ENCODE measurements at regions of chr13 and their contacts with region 1.

Region 1: DNA sequence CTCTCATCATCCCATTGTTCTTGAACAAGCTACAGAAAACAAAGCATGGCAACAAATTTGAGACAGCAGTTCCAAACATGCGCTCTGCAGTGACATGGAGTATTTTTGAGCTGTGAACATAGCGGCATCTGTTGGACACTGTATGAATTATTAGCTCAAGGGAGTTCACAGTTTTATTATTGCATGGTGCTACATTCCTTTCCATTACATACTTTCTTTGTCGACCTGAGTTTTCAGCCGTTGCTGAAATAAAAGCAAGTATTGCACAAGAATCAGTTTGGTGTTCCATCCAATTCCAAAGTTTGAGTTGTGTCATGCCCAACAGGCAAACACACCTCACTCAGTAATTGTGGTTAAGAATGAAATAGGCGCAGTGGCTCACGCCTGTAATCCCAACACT is 30.1 kb upstream of the METTL21C start:
- DNase-seq: peak in 1 of 2 experiments; percentile 68
- H3K4me3 ChIP-seq: no peak overlapping the region
- H3K4me3 Mint-ChIP-seq: no peak overlapping the region
- H3K27ac Mint-ChIP-seq: peak overlapping the region; percentile 80
- H3K4me1 ChIP-seq: no peaks in the 10 kb centered on the region
- H3K4me1 Mint-ChIP-seq: peaks cover 14% of the 10 kb centered on the region
- H3K27me3 ChIP-seq: no peaks in the 10 kb centered on the region
- H3K27me3 Mint-ChIP-seq: peaks cover 6% of the 10 kb centered on the region
- CTCF ChIP-seq: peak; percentile 55 to 63

Region 2: GRCh38 chr13:102596147-102597028 is 128.5 kb before region 1 on chr13 and contains the start of gene TPP2:
- CTCF ChIA-PET with region 1: interaction called, 49 read pairs
- POLR2A ChIA-PET with region 1: interaction called, 10 read pairs
- intact Hi-C with region 1: loop called (anchors 1 kb)
- DNase-seq: peak; percentile 99
- H3K4me3 ChIP-seq: peak within 1 kb of the TSS; percentile 81
- H3K4me3 Mint-ChIP-seq: peak within 1 kb of the TSS; percentile 86
- H3K27ac Mint-ChIP-seq: peak within 1 kb of the TSS; percentile 91
- H3K4me1 ChIP-seq: peaks cover 3% of the 10 kb centered on the region; the same call in 1 of the 2 replicates
- H3K4me1 Mint-ChIP-seq: peaks cover 23% of the 10 kb centered on the region
- H3K27me3 ChIP-seq: no peaks in the 10 kb centered on the region
- H3K27me3 Mint-ChIP-seq: no peaks in the 10 kb centered on the region
- CTCF ChIP-seq: no peak
- total RNA-seq, gene TPP2: 58.9 and 64.3 TPM in 2 replicates

Region 3: GRCh38 chr13:102667911-102668310 is 57.0 kb before region 1 on chr13:
- CTCF ChIA-PET with region 1: no interaction called
- POLR2A ChIA-PET with region 1: no interaction called
- intact Hi-C with region 1: loop called (anchors 1 kb)
- DNase-seq: peak; percentile 47 to 53
- H3K4me3 ChIP-seq: no peak overlapping the region
- H3K4me3 Mint-ChIP-seq: peak overlapping the region; percentile 0
- H3K27ac Mint-ChIP-seq: peak overlapping the region; percentile 62
- H3K4me1 ChIP-seq: peaks cover 48% of the 10 kb centered on the region
- H3K4me1 Mint-ChIP-seq: peaks cover 10% of the 10 kb centered on the region
- H3K27me3 ChIP-seq: no peaks in the 10 kb centered on the region
- H3K27me3 Mint-ChIP-seq: no peaks in the 10 kb centered on the region
- CTCF ChIP-seq: no peak

Region 4: DNA sequence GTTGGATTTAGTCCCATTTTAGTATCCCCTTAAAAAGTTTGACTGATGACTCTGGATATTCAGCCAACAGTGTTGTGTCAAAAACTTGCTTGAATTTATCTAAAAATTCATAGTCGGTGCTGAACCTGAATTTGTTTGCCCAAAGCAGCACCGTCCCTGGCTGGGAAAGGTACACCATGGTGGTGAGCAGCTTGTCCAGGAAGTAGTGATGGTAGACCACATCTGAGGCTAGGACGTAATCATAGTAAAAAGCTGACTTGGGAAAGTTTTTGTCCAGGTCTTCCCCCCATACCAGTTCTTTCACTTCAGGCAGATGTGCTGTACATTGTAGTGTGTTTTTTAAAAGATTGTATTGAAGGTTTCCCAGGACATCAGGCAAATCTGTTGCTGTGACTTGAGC is 38.9 kb before region 1 on chr13:
- CTCF ChIA-PET with region 1: no interaction called
- POLR2A ChIA-PET with region 1: no interaction called
- intact Hi-C with region 1: no loop called
- DNase-seq: no peak
- H3K4me3 ChIP-seq: no peak overlapping the region
- H3K4me3 Mint-ChIP-seq: no peak overlapping the region
- H3K27ac Mint-ChIP-seq: no peak overlapping the region
- H3K4me1 ChIP-seq: no peaks in the 10 kb centered on the region
- H3K4me1 Mint-ChIP-seq: no peaks in the 10 kb centered on the region
- H3K27me3 ChIP-seq: no peaks in the 10 kb centered on the region
- H3K27me3 Mint-ChIP-seq: no peaks in the 10 kb centered on the region
- CTCF ChIP-seq: no peak

Region 5: DNA sequence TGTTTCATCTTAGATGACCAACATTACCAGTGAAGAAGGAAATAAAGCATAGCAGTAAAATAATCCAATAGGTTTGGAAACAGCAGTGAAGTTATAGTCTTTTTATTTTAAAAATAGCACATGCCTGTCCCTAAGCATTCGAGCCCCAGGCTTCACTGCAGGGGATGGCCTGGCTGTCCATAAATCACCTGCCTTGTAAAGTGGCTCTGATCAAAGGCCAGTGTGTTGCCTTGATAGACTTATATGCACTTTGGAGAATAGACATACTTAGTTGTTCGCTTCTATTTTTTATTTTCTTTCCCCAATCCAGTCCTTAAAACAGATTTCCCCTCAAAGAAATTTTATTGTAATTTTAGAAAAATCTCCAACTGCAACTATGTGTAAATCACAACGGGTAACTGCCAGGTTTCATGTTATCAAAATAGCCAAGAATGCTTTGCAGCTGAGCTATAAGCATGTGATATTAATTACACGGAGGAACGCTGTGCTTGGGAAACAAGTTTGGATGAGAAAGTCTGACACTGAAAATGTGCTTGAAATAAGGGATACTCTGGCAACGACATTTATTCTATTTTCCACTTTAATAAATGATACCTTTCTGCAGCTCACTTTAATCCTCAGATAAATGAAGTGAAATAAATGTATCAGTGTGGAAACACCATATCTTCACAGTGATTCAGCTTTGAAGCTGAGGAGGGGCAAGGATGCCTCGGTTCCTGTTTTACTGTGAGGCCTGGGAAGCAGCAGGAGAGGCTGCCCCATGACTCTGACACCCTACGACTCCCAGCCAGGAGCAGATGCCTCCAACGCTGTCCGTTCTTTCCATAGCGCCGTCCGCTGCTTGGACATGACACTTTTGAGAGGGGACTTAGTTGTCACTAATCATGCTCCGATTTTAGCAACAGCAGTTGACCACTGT is 24.6 kb before region 1 on chr13:
- CTCF ChIA-PET with region 1: no interaction called
- POLR2A ChIA-PET with region 1: no interaction called
- intact Hi-C with region 1: loop called (anchors 1 kb)
- DNase-seq: no peak
- H3K4me3 ChIP-seq: no peak overlapping the region
- H3K4me3 Mint-ChIP-seq: no peak overlapping the region
- H3K27ac Mint-ChIP-seq: no peak overlapping the region
- H3K4me1 ChIP-seq: peaks cover 20% of the 10 kb centered on the region
- H3K4me1 Mint-ChIP-seq: peaks cover 16% of the 10 kb centered on the region
- H3K27me3 ChIP-seq: no peaks in the 10 kb centered on the region
- H3K27me3 Mint-ChIP-seq: no peaks in the 10 kb centered on the region
- CTCF ChIP-seq: no peak

Region 6: DNA sequence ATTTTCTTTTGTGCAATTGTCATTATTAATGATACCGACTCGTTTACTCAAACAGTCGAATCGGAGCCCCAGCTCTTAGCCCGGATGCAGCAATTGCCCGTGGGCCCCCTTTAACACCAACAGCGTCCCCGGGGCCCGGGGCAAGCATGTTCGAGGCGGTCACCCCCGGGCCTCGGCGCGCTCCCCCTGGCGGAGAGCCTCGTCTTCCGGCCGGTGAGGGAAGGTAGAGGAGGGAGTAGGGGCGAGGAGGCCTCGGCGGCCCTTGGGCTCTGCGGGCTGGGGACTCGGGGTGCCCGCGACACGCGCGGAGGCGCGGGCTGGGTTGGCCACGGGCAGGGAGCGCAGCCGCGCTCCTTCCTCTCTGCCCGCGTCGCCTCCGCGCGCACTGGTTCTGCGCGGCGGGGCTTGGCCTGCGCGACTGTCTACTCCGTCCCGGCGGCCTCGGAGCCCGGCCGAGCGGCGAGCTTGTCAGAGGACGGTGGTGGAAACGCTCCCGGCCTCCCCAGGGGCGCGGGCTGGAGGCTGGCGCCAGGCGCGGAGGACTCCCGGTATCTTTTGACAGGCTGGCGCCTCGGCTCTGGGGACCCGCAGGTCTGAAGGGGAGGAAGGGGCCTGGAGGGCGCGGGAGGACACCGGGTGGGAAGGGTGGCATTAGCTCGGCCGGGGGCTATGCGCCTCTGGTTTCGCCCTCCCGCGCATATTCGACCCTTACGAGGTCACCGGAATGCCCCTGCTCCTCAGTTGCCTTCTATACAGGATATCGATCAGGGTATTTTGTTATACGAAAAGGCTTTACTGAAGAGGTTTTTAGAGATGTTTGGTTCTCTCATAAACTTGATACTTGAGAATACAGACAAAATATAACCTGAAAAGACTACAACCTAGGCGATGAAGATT is 75.5 kb after region 1 on chr13:
- CTCF ChIA-PET with region 1: interaction called, 8 read pairs
- POLR2A ChIA-PET with region 1: no interaction called
- intact Hi-C with region 1: loop called (anchors 1 kb)
- DNase-seq: peak; percentile 85 to 93
- H3K4me3 ChIP-seq: peak overlapping the region; percentile 84
- H3K4me3 Mint-ChIP-seq: peak overlapping the region; percentile 93
- H3K27ac Mint-ChIP-seq: peak overlapping the region; percentile 81
- H3K4me1 ChIP-seq: 0 out of 2 replicates have a peak, but pooled peaks cover 4% of the 10 kb centered on the region
- H3K4me1 Mint-ChIP-seq: no peaks in the 10 kb centered on the region
- H3K27me3 ChIP-seq: no peaks in the 10 kb centered on the region
- H3K27me3 Mint-ChIP-seq: no peaks in the 10 kb centered on the region
- CTCF ChIP-seq: peak; percentile 91

Measured in Caco-2 (cell line).